Activated T-helper 2 cell treated with anti-CD3 and anti-CD28 coated beads, Interferon-gamma antibody, Interleukin-2, Interleukin-4, amounts not matched to agents 10 μg/mL and 5 μg/mL and 100 μg/mL, durations not matched to agents 14 hours and 24 hours and 36 hours (primary cell): ENCODE measurements at regions of chr2 and their contacts with region 1.

Region 1: GRCh38 chr2:197705121-197705911 is at the start of gene MARS2:
- DNase-seq: peak; percentile 90
- H3K4me3 Mint-ChIP-seq: peak within 1 kb of the TSS; percentile 92
- H3K27ac Mint-ChIP-seq: peak within 1 kb of the TSS; percentile 85
- H3K4me1 Mint-ChIP-seq: peaks cover 49% of the 10 kb centered on the region
- H3K27me3 Mint-ChIP-seq: no peaks in the 10 kb centered on the region
- total RNA-seq, gene MARS2: 16.8 and 17.2 TPM in 2 replicates

Region 2: GRCh38 chr2:197453161-197453914 is 252.0 kb before region 1 on chr2 and contains the start of gene COQ10B:
- intact Hi-C with region 1: loop called (anchors 1 kb)
- DNase-seq: peak; percentile 99
- H3K4me3 Mint-ChIP-seq: peak within 1 kb of the TSS; percentile 99
- H3K27ac Mint-ChIP-seq: peak within 1 kb of the TSS; percentile 100
- H3K4me1 Mint-ChIP-seq: peaks cover 26% of the 10 kb centered on the region
- H3K27me3 Mint-ChIP-seq: no peaks in the 10 kb centered on the region
- total RNA-seq, gene COQ10B: 19.9 and 20.8 TPM in 2 replicates

Region 3: GRCh38 chr2:197515739-197516392 is 189.4 kb before region 1 on chr2 and contains the start of gene MOB4:
- intact Hi-C with region 1: loop called (anchors 1 kb)
- DNase-seq: peak; percentile 94
- H3K4me3 Mint-ChIP-seq: peak within 1 kb of the TSS; percentile 99
- H3K27ac Mint-ChIP-seq: peak within 1 kb of the TSS; percentile 84
- H3K4me1 Mint-ChIP-seq: peaks cover 19% of the 10 kb centered on the region
- H3K27me3 Mint-ChIP-seq: no peaks in the 10 kb centered on the region
- total RNA-seq, gene MOB4: 18.1 and 19.5 TPM in 2 replicates

Region 4: GRCh38 chr2:197657562-197657961 is 47.8 kb before region 1 on chr2:
- intact Hi-C with region 1: no loop called
- DNase-seq: no peak
- H3K4me3 Mint-ChIP-seq: no peak overlapping the region
- H3K27ac Mint-ChIP-seq: no peak overlapping the region
- H3K4me1 Mint-ChIP-seq: peaks cover 5% of the 10 kb centered on the region
- H3K27me3 Mint-ChIP-seq: no peaks in the 10 kb centered on the region

Region 5: DNA sequence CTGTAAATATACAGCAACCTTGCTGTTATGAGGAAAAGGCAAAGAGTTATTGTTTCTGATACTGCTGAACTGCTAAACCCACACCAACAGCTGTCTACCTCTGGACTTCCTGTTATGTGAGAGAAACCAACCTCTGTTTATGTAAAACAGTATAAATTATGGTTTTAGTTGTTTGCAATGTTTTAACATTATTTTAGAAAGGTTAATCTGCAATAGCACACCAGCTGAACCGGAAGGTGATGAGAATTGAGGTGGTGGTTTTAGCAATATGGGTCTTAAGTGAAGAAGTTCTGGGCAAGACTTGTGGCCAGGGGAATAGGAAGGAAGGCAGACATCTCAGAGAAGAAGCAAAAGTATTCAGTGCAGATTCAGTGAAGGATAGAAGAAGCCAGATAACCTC is 336.9 kb after region 1 on chr2:
- intact Hi-C with region 1: loop called (anchors 10 kb)
- DNase-seq: no peak
- H3K4me3 Mint-ChIP-seq: no peak overlapping the region
- H3K27ac Mint-ChIP-seq: no peak overlapping the region
- H3K4me1 Mint-ChIP-seq: peaks cover 19% of the 10 kb centered on the region
- H3K27me3 Mint-ChIP-seq: no peaks in the 10 kb centered on the region

Region 6: GRCh38 chr2:198296665-198297308 is 591.5 kb after region 1 on chr2:
- intact Hi-C with region 1: loop called (anchors 1 kb)
- DNase-seq: peak; percentile 21
- H3K4me3 Mint-ChIP-seq: no peak overlapping the region
- H3K27ac Mint-ChIP-seq: no peak overlapping the region
- H3K4me1 Mint-ChIP-seq: peaks cover 2% of the 10 kb centered on the region
- H3K27me3 Mint-ChIP-seq: peaks cover 3% of the 10 kb centered on the region